ENCODE measurements at regions of chr17 and their contacts with region 1.

Region 1: GRCh38 chr17:35214631-35215273 is 20.6 kb upstream of the SLC35G3 start:
- DNase-seq: peak; percentile 12
- H3K4me3 Mint-ChIP-seq: peak overlapping the region; percentile 40
- H3K27ac Mint-ChIP-seq: peak overlapping the region; percentile 92
- H3K4me1 Mint-ChIP-seq: peaks cover 85% of the 10 kb centered on the region
- H3K27me3 Mint-ChIP-seq: no peaks in the 10 kb centered on the region

Region 2: DNA sequence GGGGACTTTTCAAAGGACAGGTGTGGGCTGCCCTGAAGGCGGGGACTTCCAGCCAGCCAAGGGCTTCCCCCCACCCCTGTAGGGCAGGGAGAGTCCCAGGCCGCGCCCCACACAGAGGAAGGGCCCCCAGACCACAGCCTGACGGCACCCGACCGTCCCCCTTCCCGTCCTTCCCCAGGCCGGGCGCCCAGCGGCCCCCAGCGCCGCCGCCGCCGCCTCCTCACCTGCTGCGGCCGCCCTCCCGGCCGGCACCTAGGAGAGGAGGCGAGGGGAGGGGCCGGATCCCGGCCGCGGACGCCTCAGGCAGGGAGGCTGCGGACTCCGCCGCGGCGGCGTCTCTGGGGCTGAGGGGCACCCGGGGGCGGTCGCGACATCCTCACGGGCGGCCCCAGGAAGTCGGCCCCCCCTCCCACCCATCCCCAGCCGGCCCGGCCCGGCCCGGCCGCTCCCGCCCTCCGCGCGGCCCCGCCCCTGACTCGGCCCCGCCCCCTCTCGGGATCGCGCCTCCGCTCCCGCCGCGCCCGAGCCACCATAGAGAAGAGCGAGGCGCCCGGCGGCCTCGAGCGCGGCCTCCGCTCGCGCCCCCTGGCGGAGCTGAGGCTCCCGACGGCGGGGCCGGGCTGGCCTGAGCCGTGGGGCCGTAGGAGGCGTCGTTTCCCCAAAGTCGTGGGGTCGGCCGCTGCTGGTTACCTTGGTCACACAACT is 125.7 kb before region 1 on chr17:
- intact Hi-C with region 1: no loop called
- DNase-seq: peak; percentile 87
- H3K4me3 Mint-ChIP-seq: peak overlapping the region; percentile 93
- H3K27ac Mint-ChIP-seq: peak overlapping the region; percentile 95
- H3K4me1 Mint-ChIP-seq: peaks cover 50% of the 10 kb centered on the region
- H3K27me3 Mint-ChIP-seq: no peaks in the 10 kb centered on the region

Region 3: DNA sequence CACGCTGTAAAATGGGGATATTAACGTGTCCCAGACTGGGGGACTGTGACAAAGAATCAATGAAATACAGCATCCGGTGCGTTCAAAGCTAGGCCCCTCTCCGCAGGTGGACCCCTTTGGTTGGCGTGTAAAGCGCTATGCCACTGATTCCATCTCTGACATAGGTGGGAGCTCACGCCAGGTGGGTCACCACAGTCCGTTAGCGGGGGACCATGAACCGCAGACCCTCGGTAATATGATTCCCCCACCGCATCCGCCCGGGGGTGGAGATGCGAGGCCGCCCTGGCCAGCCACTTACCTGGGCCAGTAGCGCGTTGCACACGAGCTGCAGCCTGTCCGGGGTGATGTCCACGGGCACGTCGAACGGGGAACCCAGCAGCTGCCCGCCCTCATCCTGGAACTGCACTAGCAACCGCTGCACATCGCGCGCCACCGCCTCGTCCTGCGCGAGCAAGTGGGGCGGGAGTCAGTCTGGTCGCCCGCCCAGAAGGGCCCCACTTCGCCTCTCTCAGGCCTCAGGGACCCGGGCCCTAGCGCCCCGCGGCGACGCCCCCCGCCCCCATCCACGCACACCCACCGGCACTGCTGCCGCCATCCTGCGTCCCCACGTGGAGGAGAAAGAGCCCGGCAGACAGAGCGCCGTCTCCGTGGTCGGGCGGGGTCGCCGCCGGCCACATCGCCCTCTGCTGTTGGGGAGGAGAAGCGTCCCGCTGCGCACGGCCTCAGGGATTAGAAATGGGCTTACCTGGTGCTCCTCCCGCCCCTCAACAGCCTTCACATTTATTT is 72.9 kb before region 1 on chr17 and contains the start of gene NLE1:
- intact Hi-C with region 1: loop called (anchors 5 kb)
- DNase-seq: peak; percentile 85
- H3K4me3 Mint-ChIP-seq: peak within 1 kb of the TSS; percentile 86
- H3K27ac Mint-ChIP-seq: peak within 1 kb of the TSS; percentile 80
- H3K4me1 Mint-ChIP-seq: no peaks in the 10 kb centered on the region
- H3K27me3 Mint-ChIP-seq: no peaks in the 10 kb centered on the region
- total RNA-seq, gene NLE1: 51.1 and 54.4 TPM in 2 replicates

Region 4: GRCh38 chr17:35170968-35171771 is 43.6 kb before region 1 on chr17:
- intact Hi-C with region 1: loop called (anchors 1 kb)
- DNase-seq: peak; percentile 15
- H3K4me3 Mint-ChIP-seq: peak overlapping the region; percentile 5
- H3K27ac Mint-ChIP-seq: no peak overlapping the region
- H3K4me1 Mint-ChIP-seq: peaks cover 35% of the 10 kb centered on the region
- H3K27me3 Mint-ChIP-seq: peaks cover 7% of the 10 kb centered on the region

Region 5: GRCh38 chr17:35189291-35189690 is 25.5 kb before region 1 on chr17:
- intact Hi-C with region 1: loop called (anchors 2 kb)
- DNase-seq: no peak
- H3K4me3 Mint-ChIP-seq: no peak overlapping the region
- H3K27ac Mint-ChIP-seq: no peak overlapping the region
- H3K4me1 Mint-ChIP-seq: peaks cover 49% of the 10 kb centered on the region
- H3K27me3 Mint-ChIP-seq: peaks cover 2% of the 10 kb centered on the region

Region 6: GRCh38 chr17:35254107-35254802 is 39.5 kb after region 1 on chr17:
- intact Hi-C with region 1: no loop called
- DNase-seq: no peak
- H3K4me3 Mint-ChIP-seq: no peak overlapping the region
- H3K27ac Mint-ChIP-seq: no peak overlapping the region
- H3K4me1 Mint-ChIP-seq: peaks cover 43% of the 10 kb centered on the region
- H3K27me3 Mint-ChIP-seq: no peaks in the 10 kb centered on the region

Region 7: DNA sequence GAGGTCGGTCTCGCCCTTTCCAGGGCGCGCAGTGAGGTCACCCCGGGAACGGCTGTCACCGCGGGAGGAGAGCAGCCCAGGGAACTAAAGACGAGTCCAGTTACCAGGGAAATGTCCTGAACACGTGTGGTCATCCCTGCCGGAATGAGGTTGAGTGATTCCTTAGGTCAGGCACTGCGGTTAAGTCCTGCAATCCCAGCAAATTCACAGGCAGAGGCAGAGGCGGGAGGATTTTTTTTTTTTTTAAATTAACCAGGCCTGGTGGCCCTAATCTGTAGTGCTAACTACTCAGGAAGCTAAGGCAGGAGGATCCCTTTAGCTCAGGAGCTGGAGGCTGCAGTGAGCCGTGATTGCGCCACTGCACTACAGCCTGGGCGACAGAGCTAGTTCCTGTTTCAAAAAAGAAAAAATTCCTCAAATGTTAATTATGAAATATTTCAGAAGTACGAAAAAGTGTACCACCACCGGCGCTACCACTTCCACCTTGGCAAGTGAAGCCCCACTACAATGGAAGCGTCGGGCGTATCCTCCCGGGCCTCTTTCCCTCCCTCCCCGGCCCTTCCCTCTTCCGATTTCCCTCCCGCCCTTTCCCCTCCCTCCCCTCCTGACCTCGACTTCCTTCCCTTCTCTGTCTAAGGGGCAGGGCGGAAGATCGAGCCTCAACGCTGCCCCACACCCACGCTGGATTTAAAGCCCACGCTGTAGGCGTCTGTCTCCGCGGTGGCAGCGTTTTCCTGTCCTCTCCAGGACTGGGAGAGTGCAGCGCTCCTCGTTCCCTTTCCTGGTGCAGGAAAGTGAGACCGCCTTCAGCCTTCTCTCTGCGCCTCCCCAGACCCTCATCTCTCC is 131.4 kb after region 1 on chr17:
- intact Hi-C with region 1: loop called (anchors 1 kb)
- DNase-seq: peak; percentile 26
- H3K4me3 Mint-ChIP-seq: peak overlapping the region; percentile 91
- H3K27ac Mint-ChIP-seq: peak overlapping the region; percentile 40
- H3K4me1 Mint-ChIP-seq: peaks cover 61% of the 10 kb centered on the region
- H3K27me3 Mint-ChIP-seq: peaks cover 9% of the 10 kb centered on the region

Region 8: DNA sequence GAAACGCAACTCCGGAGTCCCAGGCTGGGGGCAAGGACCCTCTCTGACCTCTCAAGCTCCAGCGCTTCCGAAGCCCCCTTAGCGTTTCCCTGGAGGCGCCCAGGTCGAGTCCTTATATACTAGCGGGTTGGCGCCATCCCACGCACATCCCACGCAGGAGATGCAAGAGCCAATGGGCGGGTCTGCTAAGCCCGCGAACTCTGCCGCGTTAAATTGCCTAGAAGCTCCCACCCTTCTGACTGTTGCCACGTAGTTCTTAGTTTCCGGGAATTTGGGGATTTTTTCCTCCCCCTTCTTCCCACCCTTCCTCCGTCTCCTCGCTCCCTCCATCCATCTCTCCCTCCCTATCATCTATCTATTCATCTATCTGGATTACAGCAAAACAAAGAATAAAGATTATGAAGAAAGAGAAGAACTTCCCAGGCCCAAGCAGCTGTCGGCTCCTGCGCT is 158.8 kb after region 1 on chr17 and contains the start of gene SLFN11:
- intact Hi-C with region 1: loop called (anchors 2 kb)
- DNase-seq: peak; percentile 79
- H3K4me3 Mint-ChIP-seq: peak within 1 kb of the TSS; percentile 93
- H3K27ac Mint-ChIP-seq: peak within 1 kb of the TSS; percentile 95
- H3K4me1 Mint-ChIP-seq: peaks cover 66% of the 10 kb centered on the region
- H3K27me3 Mint-ChIP-seq: no peaks in the 10 kb centered on the region
- total RNA-seq, gene SLFN11: 70.8 and 76.0 TPM in 2 replicates

Region 9: DNA sequence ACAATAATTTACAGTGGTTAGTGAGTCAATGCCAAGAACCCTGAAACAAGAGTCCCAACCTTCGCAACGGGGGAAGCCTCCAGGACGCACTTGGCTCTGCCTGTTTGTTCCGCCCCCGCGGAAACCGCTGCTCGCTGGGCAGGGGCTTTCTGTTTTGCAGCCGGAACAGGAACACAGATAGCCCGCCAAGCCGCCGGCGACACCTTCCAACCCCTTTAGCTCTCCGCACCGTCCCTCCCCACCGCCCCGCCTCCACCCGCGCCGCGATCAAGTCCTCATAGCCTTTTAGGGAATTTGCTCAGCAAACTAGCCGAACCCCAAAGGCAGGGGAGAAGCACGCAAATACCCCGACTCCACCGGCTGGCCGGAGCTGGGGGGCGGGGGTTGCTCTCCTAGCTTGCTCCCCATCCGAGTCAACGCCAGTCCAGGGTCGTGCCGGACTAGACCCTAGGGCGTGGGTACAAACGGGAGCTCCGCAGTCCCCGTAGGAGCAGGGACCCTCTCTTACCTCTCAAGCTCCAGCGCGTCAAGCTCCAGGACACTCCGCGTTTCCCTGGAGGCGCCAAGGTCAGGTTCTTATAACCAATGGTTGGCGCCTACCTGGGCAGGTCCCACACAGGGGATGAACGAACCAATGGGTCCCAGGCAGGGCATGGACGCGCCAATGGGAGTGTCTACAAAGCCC is 233.6 kb after region 1 on chr17 and contains the start of gene SLFN13:
- intact Hi-C with region 1: loop called (anchors 1 kb)
- DNase-seq: peak; percentile 84
- H3K4me3 Mint-ChIP-seq: peak within 1 kb of the TSS; percentile 67
- H3K27ac Mint-ChIP-seq: peak within 1 kb of the TSS; percentile 66
- H3K4me1 Mint-ChIP-seq: peaks cover 27% of the 10 kb centered on the region
- H3K27me3 Mint-ChIP-seq: no peaks in the 10 kb centered on the region
- total RNA-seq, gene SLFN13: 32.2 and 32.7 TPM in 2 replicates

Region 10: DNA sequence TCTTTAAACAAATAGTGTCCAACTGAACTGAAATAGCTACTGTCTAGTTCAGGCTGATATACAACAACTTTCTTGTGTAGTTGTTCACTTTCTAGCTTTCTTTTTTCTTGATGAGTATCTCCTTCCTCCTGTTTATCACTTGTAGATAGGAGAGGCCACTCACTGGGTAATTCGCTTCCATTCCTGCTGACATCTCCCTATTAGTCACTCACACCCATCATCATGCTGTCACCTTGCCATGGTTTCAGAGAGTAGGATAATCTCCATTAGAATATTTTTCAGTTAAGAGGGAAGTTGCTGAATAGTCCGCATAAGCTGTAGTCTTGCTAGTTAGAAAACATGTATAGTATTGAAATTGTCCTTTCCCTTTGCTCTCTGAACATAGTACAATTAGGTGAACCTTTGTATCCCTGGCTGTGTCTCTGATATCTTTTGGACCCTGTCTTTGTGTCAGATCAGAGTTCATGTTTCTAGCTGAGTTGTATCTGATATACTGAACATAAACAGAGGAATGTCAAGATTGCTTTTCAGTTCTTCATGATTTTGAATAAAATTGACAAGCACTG is 452.3 kb after region 1 on chr17:
- intact Hi-C with region 1: no loop called
- DNase-seq: no peak
- H3K4me3 Mint-ChIP-seq: no peak overlapping the region
- H3K27ac Mint-ChIP-seq: no peak overlapping the region
- H3K4me1 Mint-ChIP-seq: peaks cover 12% of the 10 kb centered on the region
- H3K27me3 Mint-ChIP-seq: no peaks in the 10 kb centered on the region

Measured in activated T-helper 1 cell treated with anti-CD3 and anti-CD28 coated beads, Interleukin-12 subunit alpha, Interleukin-12 subunit beta, Interleukin-2, Interleukin-4 antibody, amounts not matched to agents 30 ng/mL and 10 ng/mL and 1 ng/mL, durations not matched to agents 14 hours and 24 hours and 36 hours (primary cell).